ENCODE measurements at regions of chr19 and their contacts with region 1.

Region 1: DNA sequence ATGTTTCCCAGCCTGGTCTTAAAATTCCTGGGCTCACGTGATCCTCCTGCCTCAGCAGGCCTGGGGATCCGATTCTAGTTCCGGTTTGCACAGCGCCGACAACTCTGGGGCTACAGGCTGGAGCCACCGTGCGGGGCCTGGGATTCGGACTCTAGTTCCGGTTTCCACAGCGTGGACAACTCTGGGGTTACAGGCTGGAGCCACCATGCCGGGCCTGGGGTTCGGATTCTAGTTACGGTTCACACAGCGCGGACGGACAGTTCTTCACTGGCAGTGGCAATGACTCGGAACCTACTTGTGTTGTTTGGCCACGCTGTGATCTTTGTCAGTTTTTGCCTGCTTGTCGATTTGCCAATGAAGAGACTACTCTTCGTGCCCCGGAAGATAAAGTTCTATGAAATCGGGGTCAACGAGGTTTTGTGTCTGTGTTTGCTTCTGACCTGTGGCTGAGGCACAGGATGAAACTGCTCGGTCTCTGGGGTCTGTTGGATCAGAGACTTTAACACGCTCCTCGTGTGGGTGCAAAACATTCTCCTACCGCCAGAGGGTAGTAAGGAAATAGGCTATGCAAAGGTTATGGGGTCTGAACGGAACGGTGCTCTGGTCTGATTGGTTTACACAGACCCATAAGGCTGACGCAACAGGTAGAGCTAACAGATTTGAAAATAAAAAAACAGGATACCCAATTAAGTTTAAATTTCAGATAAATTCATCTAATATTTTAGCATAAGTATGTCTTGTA is 12.1 kb upstream of the ZSCAN1 start:
- DNase-seq: peak; percentile 37 to 62 (median 58)
- ATAC-seq: peak; percentile 73
- H3K4me3 ChIP-seq: no peak overlapping the region
- H3K27ac ChIP-seq: no peak overlapping the region
- H3K4me1 ChIP-seq: no peaks in the 10 kb centered on the region
- H3K27me3 ChIP-seq: no peaks in the 10 kb centered on the region
- CTCF ChIP-seq: peak; percentile 38 to 54 (median 51)
- EP300 ChIP-seq: no peak
- POLR2A ChIP-seq: no peak
- RAD21 ChIP-seq: peak in 1 of 2 experiments; percentile 63; a peak in 2 of 4 replicates

Region 2: GRCh38 chr19:58097781-58098681 is 76.3 kb after region 1 on chr19 and contains the start of gene ZSCAN18:
- CTCF ChIA-PET with region 1: no interaction called
- POLR2A ChIA-PET with region 1: no interaction called
- in situ Hi-C with region 1: no loop called
- intact Hi-C with region 1: no loop called
- DNase-seq: peak; percentile 68 to 89 (median 86)
- ATAC-seq: peak; percentile 98
- H3K4me3 ChIP-seq: peak within 1 kb of the TSS; percentile 49
- H3K27ac ChIP-seq: no peak within 1 kb of the TSS
- H3K4me1 ChIP-seq: peaks cover 0 to 6% of the 10 kb centered on the region in 2 experiments; a peak in 1 of 5 replicates
- H3K27me3 ChIP-seq: no peaks in the 10 kb centered on the region
- CTCF ChIP-seq: no peak
- EP300 ChIP-seq: no peak
- POLR2A ChIP-seq: no peak
- RAD21 ChIP-seq: no peak
- polyA plus RNA-seq, gene ZSCAN18: 0.08 TPM in 1 of 2 experiments, not detected in the other

Region 3: GRCh38 chr19:58154679-58155648 is 133.3 kb after region 1 on chr19:
- CTCF ChIA-PET with region 1: no interaction called
- POLR2A ChIA-PET with region 1: no interaction called
- in situ Hi-C with region 1: loop called (anchors 10 kb)
- intact Hi-C with region 1: no loop called
- DNase-seq: peak; percentile 79 to 88 (median 82)
- ATAC-seq: peak; percentile 94
- H3K4me3 ChIP-seq: peak overlapping the region; percentile 67
- H3K27ac ChIP-seq: no peak overlapping the region
- H3K4me1 ChIP-seq: peaks cover 0 to 24% of the 10 kb centered on the region in 2 experiments; a peak in 2 of 5 replicates
- H3K27me3 ChIP-seq: no peaks in the 10 kb centered on the region
- CTCF ChIP-seq: peak; percentile 84 to 89 (median 85)
- EP300 ChIP-seq: no peak
- POLR2A ChIP-seq: no peak; the same call in 1 of the 2 replicates
- RAD21 ChIP-seq: peak; percentile 80 to 94

Measured in K562 (cell line).